CD8-positive, alpha-beta T cell (primary cell): ENCODE measurements at regions of chr18 and their contacts with region 1.

Region 1: DNA sequence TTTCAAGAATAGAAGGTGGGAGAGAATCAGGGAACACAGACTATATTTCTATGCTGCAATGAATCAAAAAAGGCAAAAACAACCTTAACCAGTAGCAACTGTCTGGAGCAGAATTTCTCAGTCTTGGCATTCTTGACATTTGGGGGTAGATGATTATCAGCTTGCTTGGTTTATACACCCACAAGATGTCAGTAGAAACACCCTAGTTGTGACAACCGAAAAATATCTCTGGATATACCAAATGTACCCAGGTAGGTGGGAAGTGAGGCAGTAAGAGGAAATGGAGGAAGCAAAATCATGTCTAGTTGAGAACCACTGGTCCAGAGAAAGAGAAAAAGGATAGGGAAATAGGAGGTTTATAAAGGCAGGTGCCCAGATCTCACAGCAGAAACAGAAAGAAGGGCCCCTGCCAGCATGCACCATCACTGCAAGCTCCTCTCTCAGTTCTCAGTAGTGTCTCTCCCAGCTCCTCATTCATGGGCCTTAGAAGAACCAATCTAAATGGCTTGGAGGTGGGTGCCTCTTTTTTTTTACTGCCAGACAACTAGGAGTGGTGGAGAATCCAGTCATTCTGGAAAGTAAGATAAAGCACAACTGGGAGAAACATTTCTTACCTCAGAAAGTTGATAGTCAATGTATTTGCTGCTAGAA is 50.4 kb downstream of the MBD2 start:
- DNase-seq: peak in 1 of 9 experiments; percentile 16
- ATAC-seq: no peak
- H3K4me3 ChIP-seq: no peak overlapping the region
- H3K4me3 Mint-ChIP-seq: no peak overlapping the region
- H3K27ac ChIP-seq: no peak overlapping the region
- H3K27ac Mint-ChIP-seq: peak overlapping the region; percentile 6
- H3K4me1 ChIP-seq: no peaks in the 10 kb centered on the region
- H3K4me1 Mint-ChIP-seq: peaks cover 18% of the 10 kb centered on the region
- H3K27me3 ChIP-seq: no peaks in the 10 kb centered on the region
- H3K27me3 Mint-ChIP-seq: no peaks in the 10 kb centered on the region
- CTCF ChIP-seq: no peak

Region 2: GRCh38 chr18:54209471-54210180 is 35.5 kb after region 1 on chr18:
- CTCF ChIA-PET with region 1: no interaction called
- POLR2A ChIA-PET with region 1: no interaction called
- intact Hi-C with region 1: loop called in 1 of 2 experiments (anchors 5 kb)
- DNase-seq: no peak
- ATAC-seq: no peak
- H3K4me3 ChIP-seq: no peak overlapping the region
- H3K4me3 Mint-ChIP-seq: no peak overlapping the region
- H3K27ac ChIP-seq: no peak overlapping the region
- H3K27ac Mint-ChIP-seq: peak overlapping the region; percentile 69
- H3K4me1 ChIP-seq: peaks cover 6% of the 10 kb centered on the region
- H3K4me1 Mint-ChIP-seq: peaks cover 60% of the 10 kb centered on the region
- H3K27me3 ChIP-seq: no peaks in the 10 kb centered on the region
- H3K27me3 Mint-ChIP-seq: no peaks in the 10 kb centered on the region
- CTCF ChIP-seq: no peak